ENCODE measurements at regions of chr11 and their contacts with region 1.

Region 1: GRCh38 chr11:88212292-88212691 is 37.0 kb upstream of the RAB38 start:
- DNase-seq: no peak
- ATAC-seq: no peak
- H3K4me3 ChIP-seq: no peak overlapping the region
- H3K27ac ChIP-seq: no peak overlapping the region
- H3K4me1 ChIP-seq: no peaks in the 10 kb centered on the region
- H3K27me3 ChIP-seq: no peaks in the 10 kb centered on the region
- CTCF ChIP-seq: no peak

Region 2: DNA sequence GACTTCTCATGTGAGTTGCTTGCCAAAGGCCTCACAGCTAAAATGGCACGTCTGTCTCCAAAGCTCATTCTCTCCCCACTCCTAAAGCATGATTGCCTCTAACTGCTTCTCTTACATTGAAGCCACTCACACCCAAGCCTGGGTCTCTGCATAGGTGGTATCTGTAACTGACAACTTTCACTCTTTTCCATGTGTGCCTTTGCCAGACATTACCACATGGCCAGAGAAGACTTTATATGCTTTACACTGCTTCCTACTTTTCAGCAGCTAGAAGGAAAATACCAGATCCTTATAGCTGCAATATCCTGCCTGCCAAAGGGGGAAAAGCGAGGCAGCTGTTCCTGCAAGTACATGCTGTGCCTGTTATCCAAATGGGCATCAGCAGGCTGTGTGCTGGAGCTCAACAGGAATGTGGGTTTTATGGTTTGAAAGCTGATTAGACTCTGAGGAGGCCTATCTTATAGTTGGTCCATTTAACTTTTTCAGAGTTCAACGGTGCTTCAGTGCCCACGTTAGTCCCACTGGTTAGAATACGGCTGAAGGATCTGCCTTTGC is 584.2 kb before region 1 on chr11:
- intact Hi-C with region 1: loop called in 1 of 10 experiments (anchors 5 kb)
- DNase-seq: no peak
- ATAC-seq: no peak
- H3K4me3 ChIP-seq: no peak overlapping the region
- H3K27ac ChIP-seq: no peak overlapping the region
- H3K4me1 ChIP-seq: no peaks in the 10 kb centered on the region
- H3K27me3 ChIP-seq: no peaks in the 10 kb centered on the region
- CTCF ChIP-seq: no peak

Region 3: DNA sequence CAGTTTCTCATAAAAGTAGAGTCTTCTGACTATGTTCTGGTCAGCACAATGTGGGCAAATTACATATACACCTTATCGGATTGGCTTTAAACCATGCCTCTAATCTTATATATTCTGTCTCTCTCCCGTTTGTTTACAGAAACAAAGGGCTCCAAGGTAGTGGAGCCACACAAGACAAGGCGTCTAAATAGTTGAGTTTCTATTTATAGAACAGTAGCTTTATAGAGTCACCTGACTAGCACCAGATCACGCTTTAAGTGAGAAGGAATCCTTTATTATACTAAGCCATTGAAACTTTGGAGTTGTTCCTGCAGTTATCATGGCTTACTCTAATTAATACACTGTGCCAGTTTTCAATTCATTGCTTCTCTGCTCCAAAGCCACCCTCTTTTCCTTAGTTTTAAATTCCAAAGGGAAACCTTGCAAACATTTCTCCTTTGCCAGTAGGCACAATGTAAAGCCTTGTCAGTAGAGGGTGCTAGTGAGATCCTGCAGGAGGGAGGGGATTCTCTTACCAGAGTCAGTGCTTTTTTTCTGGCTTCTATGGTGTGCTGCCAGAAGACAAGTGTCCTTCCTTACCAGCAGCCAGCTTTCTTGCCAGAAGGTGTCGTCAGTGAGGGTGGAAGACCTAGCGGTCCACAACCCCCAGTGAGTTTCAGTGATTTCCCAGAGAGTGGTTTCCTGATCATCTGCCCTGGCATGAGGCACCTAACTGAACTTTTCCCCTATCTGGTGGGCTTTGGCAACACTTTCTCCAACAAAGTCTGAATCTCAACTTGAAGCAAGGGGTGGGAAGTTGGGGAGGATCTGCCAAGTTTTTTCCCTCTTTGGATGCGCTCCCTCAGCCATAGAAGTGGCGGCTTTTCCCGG is 108.7 kb before region 1 on chr11:
- intact Hi-C with region 1: no loop called
- DNase-seq: peak in 1 of 2 donors; percentile 5
- ATAC-seq: no peak
- H3K4me3 ChIP-seq: no peak overlapping the region
- H3K27ac ChIP-seq: no peak overlapping the region
- H3K4me1 ChIP-seq: no peaks in the 10 kb centered on the region
- H3K27me3 ChIP-seq: no peaks in the 10 kb centered on the region
- CTCF ChIP-seq: peak in 6 of 9 donors; percentile 17 to 57 (median 30)

Region 4: DNA sequence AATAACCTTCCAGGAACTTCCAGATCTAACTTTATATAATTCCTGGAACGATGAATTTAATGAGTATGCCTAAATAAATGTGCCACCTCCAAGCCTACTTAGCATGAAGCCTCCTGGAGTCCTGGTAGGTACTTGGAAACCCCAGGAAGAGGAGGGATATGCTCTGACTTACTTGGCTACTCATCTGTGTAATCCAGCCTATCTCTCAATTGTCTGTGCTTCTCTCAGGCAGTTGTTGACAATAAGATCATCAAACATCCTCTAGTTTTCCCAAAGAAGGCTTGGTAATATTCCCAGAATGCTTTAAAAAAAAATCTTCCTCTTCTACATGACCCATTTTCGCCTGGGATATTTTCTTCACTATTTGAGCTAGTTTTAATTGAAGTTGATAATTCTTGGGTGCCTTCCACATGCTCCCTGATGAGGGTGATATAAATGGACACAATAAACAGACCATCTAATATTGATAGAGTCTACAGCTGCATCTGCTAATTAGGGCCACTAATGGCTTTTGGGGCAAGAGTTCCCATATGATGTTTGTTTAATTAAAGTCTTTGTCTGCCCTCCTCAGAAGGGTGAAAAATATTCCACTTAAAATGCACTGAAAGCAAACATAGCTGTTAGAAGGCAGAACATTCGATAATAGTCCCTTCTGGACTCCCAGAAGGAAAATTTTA is 38.4 kb after region 1 on chr11:
- intact Hi-C with region 1: no loop called
- DNase-seq: no peak
- ATAC-seq: no peak
- H3K4me3 ChIP-seq: no peak overlapping the region
- H3K27ac ChIP-seq: no peak overlapping the region
- H3K4me1 ChIP-seq: peaks cover 0 to 3% (median 0%) of the 10 kb centered on the region in 9 donors
- H3K27me3 ChIP-seq: no peaks in the 10 kb centered on the region
- CTCF ChIP-seq: no peak

Measured in heart right ventricle (tissue), 16 donors.